ENCODE measurements at regions of chr3 and their contacts with region 1.

Region 1: GRCh38 chr3:185983495-185984141 is 45.8 kb upstream of the TRA2B start:
- DNase-seq: peak in 1 of 2 donors; percentile 85
- H3K4me3 ChIP-seq: peak overlapping the region in 1 of 2 donors; percentile 33
- H3K27ac ChIP-seq: no peak overlapping the region
- H3K4me1 ChIP-seq: peaks cover 4 to 38% of the 10 kb centered on the region in 2 donors
- H3K27me3 ChIP-seq: no peaks in the 10 kb centered on the region
- CTCF ChIP-seq: peak; percentile 82 to 92 (median 90)

Region 2: GRCh38 chr3:185659942-185660921 is 323.4 kb before region 1 on chr3:
- intact Hi-C with region 1: loop called (anchors 5 kb)
- DNase-seq: peak in 1 of 2 donors; percentile 85
- H3K4me3 ChIP-seq: peak overlapping the region in 1 of 2 donors; percentile 24
- H3K27ac ChIP-seq: peak overlapping the region in 1 of 2 donors; percentile 14
- H3K4me1 ChIP-seq: peaks cover 4 to 47% of the 10 kb centered on the region in 2 donors
- H3K27me3 ChIP-seq: no peaks in the 10 kb centered on the region
- CTCF ChIP-seq: peak; percentile 82 to 97 (median 96)

Region 3: GRCh38 chr3:185942907-185943759 is 40.5 kb before region 1 on chr3:
- intact Hi-C with region 1: loop called (anchors 5 kb)
- DNase-seq: peak; percentile 44 to 93
- H3K4me3 ChIP-seq: peak overlapping the region in 1 of 2 donors; percentile 53
- H3K27ac ChIP-seq: peak overlapping the region; percentile 66 to 78
- H3K4me1 ChIP-seq: peaks cover 0 to 7% of the 10 kb centered on the region in 2 donors
- H3K27me3 ChIP-seq: no peaks in the 10 kb centered on the region
- CTCF ChIP-seq: peak; percentile 88 to 100 (median 99)

Region 4: DNA sequence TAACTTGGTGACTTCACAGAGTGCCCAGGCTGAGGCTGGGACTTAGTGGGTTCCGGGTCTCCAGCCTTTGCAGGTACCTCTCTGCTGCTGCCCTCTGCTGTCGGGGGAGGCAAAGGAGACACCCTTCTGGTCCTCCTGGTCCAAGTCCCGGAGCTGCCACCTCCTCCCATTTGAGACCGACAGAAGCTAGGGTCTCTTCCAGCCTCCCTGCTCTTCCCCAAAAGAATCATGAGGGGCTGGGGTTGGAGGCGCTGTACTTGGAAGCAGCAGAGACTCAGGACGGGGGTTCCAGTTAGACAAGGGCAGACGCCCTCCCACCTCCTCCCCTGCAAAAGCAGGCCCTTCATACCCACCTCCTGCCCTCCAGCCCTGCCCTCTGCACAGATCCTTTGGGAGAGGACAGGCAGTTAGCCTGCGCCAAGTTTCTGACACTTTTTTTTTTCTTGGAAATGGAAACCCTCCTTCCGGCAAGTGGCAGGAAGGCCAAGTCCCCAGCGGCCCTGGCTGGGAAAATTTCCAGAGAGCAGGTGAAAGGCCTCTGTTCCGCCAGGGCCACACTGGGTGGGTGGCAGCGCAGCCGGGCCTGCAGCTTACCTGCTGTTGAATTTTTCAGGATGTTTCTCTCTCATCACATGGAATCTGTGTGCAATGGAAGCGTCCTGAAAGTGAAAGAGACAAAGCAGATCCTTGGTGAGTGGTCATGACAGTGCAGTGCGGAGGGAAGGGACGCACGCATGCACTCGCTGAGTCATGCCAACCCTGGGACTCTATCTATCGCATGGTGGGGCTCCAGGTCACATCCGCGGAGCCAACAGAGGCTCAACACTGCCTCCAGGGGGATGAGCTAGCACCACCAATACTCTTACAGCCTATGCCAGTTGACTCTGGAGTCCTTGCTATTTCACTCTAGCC is 258.5 kb after region 1 on chr3:
- intact Hi-C with region 1: loop called (anchors 2 kb)
- DNase-seq: peak; percentile 39 to 82
- H3K4me3 ChIP-seq: peak overlapping the region; percentile 41
- H3K27ac ChIP-seq: no peak overlapping the region
- H3K4me1 ChIP-seq: peaks cover 0 to 5% of the 10 kb centered on the region in 2 donors
- H3K27me3 ChIP-seq: no peaks in the 10 kb centered on the region
- CTCF ChIP-seq: peak; percentile 31 to 38 (median 38)

Region 5: DNA sequence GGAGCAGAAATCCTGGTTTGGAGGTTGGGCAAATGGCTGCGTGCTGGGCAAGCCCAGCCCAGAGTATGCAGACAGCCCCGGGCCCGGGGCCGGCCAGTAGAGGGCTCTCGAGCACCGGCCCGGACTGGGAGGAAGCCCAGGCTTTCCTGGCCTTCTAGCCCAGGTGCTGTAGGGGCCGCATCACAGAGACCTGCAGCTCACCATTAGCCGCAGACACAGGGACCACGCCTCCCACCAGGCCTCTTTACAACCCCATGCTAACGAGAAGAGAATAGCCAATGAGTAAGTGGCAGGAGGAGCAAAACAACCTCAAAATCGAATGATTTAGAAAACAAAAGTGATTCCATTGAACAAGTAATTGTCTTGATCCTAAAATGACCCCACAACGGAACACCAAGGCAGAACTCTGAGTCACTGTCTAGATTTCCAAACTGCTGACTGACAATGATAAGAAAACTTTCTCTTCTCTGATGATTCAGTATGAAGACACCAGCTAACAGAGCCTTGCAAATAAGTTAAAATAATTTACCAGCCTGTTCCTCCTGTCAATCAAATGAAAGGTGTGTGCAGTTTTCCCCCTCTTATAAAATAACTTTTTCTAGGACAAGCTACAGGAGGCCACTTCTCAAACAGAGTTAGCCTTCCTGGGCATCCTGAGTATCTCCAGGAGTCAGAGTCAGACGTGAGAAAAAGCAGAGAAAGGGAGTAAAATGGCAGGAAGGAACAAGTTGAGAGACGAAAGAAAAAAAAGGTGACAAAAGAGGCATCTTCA is 276.2 kb after region 1 on chr3:
- intact Hi-C with region 1: loop called (anchors 5 kb)
- DNase-seq: peak in 1 of 2 donors; percentile 74
- H3K4me3 ChIP-seq: no peak overlapping the region
- H3K27ac ChIP-seq: no peak overlapping the region
- H3K4me1 ChIP-seq: peaks cover 0 to 2% of the 10 kb centered on the region in 2 donors
- H3K27me3 ChIP-seq: no peaks in the 10 kb centered on the region
- CTCF ChIP-seq: peak; percentile 80 to 91 (median 90)

Region 6: GRCh38 chr3:186540221-186540834 is 556.7 kb after region 1 on chr3:
- intact Hi-C with region 1: loop called (anchors 1 kb)
- DNase-seq: peak in 1 of 2 donors; percentile 86
- H3K4me3 ChIP-seq: peak overlapping the region; percentile 22 to 37
- H3K27ac ChIP-seq: no peak overlapping the region
- H3K4me1 ChIP-seq: no peaks in the 10 kb centered on the region
- H3K27me3 ChIP-seq: no peaks in the 10 kb centered on the region
- CTCF ChIP-seq: peak; percentile 60 to 76 (median 70)